ENCODE measurements at regions of chr20 and their contacts with region 1.

Region 1: DNA sequence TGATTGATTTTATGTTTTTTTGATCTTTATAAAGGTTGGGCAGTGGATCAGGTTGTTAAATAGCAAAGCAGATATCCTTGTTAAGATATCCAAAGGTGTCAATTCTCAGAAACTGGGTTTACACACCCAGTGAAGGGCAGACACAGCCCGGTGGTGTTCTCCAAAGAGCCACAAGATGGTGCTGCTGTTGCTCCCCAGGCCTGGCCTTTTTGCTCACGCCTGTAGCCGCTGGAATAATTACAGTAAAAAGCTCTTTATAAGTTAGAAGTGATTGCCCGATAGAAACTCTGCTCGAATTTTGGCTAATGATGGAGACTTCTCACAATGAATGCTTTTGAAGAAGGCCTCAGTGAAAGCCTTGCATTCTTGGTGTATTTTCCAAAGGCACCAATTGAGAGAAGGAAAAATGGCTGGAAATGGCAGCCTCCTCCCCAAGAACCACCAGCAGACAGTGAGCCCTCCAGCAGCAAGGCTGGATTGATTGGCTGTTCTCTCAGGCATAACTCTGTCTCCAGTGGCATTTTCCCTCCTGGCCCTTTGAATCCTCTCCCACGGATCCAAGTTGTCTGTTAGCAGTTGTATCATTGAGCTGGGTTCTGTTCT is 120.5 kb upstream of the CHD6 start:
- DNase-seq: peak; percentile 69
- H3K4me3 Mint-ChIP-seq: no peak overlapping the region
- H3K27ac Mint-ChIP-seq: no peak overlapping the region
- H3K4me1 Mint-ChIP-seq: no peaks in the 10 kb centered on the region
- H3K27me3 Mint-ChIP-seq: no peaks in the 10 kb centered on the region

Region 2: DNA sequence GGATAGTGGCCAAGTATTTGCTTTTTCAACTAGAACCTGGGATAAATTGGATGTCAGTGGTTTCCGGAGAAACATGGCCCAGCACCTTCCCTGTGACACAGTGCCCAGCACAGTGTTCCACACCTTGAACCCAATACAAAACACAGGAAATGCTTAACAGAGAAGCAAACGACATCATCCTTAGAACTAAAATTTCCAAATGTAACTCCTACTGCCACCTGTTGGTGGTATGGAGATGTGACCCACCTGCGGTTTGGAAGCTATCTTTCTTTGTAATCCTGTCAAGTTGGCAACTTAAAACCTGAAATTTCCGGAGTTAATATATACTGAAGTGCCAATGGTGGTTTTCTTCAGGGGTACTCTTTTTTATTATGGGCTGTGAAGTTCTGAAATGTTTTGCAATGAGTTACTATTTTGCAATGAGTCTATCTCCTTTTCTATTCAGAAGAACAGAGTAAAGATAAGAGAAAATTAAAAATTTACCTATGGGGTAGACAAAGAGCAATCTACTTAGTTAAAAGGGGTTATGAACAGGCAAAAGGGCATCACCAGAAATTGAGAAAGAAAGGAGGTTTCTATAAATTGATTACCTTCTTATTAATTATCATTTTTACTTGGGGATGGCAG is 792.2 kb after region 1 on chr20:
- CTCF ChIA-PET with region 1: no interaction called
- intact Hi-C with region 1: loop called (anchors 2 kb)
- DNase-seq: peak; percentile 8
- H3K4me3 Mint-ChIP-seq: no peak overlapping the region
- H3K27ac Mint-ChIP-seq: no peak overlapping the region
- H3K4me1 Mint-ChIP-seq: no peaks in the 10 kb centered on the region
- H3K27me3 Mint-ChIP-seq: peaks cover 5% of the 10 kb centered on the region

Region 3: DNA sequence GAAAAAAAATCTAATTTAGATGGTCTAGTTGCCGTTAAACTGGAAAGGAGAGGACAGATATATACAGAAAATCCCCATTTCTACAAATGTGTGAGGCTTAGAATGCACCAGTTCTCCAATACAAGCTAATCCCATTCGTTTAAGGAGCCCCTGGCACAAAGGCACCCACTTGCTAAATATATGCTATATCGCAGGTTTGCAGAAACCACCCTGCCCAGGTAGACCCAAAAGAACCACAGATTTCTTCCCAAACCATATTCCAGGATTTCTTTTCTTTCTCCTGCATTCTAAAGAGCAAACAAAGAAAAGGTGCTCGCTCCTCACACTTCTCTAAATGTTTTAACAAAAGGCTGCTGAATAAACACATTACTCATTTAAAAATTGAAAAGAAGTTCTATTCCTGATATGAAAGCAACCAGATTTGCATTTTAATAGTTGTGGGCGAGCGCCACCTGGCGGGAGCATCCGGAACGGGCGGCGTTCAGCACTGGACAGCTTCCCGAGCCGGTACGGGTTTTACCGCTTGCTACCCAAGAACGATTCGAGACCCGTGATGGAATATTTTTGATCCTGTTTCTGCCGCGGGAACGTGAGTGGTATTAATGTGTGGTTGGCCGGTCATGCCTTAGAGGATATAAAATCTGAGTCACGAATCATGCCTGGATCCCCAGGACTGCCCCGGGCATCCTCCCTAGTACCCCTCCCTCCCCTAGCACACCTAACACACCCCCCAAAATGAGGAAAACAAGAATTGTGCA is 1449.0 kb after region 1 on chr20:
- CTCF ChIA-PET with region 1: interaction called, 3 read pairs
- intact Hi-C with region 1: loop called (anchors 1 kb)
- DNase-seq: peak; percentile 86
- H3K4me3 Mint-ChIP-seq: no peak overlapping the region
- H3K27ac Mint-ChIP-seq: no peak overlapping the region
- H3K4me1 Mint-ChIP-seq: peaks cover 8% of the 10 kb centered on the region
- H3K27me3 Mint-ChIP-seq: peaks cover 43% of the 10 kb centered on the region

Region 4: DNA sequence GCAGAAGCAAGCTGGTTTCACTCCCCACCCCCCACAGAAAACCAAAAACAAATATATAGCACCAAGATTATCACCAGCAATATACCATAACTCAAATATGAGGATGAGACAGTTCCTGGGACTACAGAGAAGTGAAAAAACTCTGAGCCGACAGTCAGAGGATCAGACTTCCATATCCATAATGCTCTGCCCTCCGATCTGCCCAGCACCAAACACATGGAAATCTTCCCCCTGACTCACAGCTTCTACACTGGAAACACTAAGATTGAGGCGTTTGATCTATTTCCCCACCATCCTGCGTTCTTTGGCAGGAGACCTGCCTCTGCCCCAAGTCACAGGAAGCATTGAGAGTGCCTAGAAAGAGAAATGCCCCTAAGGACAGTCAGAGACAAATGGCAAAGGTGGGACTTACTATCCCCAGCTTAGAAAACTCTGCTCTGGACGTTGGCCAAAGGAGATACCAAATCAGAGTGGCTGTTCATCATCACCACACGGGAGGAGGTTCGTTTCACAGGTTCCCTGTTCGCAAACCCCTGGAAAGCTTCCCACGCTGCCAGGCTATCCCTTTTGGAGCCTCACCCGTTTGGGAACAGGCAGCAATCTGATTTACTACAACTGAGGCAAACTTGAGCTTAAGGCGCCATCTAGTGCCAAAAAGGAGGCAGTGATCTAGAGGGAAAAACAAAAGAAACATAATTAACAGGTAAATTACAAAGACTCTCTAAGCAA is 1670.3 kb after region 1 on chr20:
- CTCF ChIA-PET with region 1: no interaction called
- intact Hi-C with region 1: loop called (anchors 2 kb)
- DNase-seq: peak; percentile 35
- H3K4me3 Mint-ChIP-seq: no peak overlapping the region
- H3K27ac Mint-ChIP-seq: no peak overlapping the region
- H3K4me1 Mint-ChIP-seq: no peaks in the 10 kb centered on the region
- H3K27me3 Mint-ChIP-seq: peaks cover 39% of the 10 kb centered on the region

Measured in activated naive CD4-positive, alpha-beta T cell treated with anti-CD3 and anti-CD28 coated beads for 36 hours (primary cell).